Cardiac septum (tissue), 1 donor: ENCODE measurements at regions of chr12 and their contacts with region 1.

Region 1: DNA sequence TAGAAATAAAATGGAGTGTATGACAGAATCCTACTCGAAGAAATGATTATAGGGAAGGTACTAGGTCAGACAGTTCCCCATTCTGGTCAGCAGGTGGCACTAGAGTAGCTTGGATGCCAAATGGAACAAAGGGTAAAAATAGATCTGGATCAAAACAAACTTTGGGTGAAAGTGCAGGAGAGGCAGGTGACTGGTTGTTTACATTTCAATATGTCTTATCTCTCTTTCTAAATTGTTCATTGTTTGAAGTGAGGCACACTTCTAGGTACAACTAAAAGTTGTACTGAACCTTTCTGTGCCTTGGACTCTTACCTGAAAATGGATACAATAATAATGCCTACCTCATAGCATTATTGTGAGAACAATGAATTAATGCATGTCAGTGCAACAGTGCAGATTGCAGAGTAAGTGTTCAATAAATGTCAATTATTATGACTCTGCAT is 62.0 kb upstream of the OSBPL8 start:
- DNase-seq: no peak

Region 2: GRCh38 chr12:75784591-75784990 is 837.0 kb before region 1 on chr12:
- intact Hi-C with region 1: no loop called
- DNase-seq: no peak

Region 3: DNA sequence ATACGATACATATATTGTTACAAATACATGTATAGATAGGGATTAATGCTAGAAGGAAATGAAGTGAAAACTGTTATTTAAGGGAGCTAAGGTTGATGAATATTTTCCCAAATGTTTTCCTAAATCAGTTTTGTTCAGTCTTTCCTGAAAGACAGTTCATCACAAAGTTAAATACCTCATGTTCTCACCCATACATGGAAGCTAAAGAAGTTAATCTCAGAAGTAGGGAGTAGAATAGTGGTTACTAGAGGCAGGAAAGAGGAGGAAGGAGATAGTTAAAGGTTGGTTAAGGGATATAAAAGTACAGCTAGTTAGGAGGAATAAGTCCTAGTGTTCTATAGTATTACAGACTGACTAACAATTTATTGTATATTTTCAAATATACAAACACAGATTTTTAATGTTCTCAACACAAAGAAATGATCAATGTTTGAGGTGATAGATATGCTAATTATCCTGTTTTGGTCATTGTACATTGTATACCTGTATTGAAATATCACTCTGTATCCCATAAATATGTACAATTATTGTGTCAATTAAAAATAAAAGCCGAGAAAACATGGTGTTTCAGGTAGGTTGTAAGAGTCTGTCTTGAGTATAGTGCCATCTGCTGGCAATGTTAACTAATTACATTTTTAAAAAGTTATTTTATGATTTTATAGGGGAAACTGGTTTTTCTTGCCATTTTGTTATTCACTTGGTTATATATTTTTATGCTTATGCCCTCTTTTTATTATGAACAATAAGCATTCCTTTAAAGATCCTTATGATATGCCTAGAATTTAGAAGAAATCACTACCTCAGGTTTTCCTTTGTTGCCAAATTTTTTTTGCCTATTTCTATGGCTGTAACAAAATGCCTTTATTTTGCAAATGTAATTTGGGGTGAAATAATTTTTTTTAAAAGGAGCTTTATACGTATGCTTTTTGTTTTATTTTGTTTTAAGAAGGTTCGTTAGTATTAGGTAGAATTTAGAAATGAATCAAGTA is 169.3 kb after region 1 on chr12:
- intact Hi-C with region 1: loop called (anchors 2 kb)
- DNase-seq: no peak

Region 4: DNA sequence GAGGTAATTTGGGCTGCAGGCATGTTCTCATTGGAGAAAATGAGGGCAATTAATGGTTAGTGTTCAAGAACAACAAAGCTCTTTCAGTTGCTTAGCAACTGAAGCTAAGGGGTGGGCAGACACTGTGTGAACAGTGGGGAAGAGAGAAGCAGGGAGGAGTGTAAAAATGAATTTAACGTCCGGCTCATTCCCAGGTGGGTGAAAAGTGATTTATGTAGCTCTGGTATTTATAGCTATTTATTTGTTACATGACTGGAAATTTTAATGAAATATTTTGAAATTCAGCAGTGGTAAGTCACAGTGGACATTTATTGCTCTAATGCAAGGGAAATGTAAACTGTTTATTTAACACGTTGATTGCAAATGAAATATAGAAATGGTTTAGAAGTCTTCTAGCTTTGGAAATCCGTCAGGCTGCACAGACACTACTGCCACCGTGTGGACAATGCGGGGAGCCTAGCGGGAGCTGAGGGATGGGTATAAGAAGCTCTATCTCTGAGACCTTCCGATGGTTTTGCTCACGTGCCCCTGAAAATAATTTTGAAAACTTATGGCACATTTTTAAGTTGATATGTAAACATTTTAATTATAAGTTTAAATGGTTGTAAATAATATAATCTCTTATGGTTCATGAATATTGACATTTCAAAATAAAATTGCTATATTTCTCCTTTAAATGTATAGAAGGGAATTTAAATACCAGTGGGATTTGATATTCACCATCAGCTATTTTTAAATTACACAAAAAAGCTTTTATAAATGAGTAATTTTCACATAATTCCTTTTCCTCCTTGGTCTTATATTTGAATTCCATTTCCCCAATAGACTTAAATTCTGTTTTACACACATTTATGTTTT is 389.3 kb after region 1 on chr12:
- intact Hi-C with region 1: loop called (anchors 5 kb)
- DNase-seq: no peak